PC-9 (cell line): ENCODE measurements at regions of chrX and their contacts with region 1.

Region 1: DNA sequence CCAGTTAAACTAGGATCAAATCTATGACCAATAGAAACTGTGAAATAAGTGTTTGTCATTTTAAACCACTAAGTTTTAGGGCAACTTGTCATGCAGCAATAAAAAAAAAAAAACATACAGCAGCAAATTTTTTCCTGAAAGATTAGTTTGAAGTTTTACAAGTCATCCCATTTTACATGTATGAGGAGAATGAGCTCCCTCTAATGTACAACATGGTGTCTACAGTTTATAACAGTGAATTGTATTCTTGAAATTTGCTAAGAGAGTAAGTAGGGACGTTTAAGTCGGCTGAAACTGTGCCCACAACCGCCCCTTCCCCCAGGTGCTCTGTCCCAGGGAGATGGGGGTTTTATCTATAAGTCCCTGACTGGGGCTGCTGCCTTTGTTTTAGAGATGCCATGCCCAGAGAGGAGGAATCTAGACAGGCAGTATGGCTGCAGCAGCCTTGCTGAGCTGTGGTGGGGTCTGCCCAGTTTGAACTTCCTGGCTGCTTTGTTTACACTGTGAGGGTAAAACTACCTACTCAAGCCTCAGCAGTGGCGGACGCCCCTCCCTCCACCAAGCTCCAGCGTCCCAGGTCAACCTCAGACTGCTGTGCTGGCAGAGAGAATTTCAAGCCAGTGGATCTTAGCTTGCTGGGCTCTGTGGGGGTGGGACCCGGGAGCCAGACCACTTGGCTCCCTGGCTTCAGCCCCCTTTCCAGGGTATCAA is 499.3 kb upstream of the CT83 start:
- DNase-seq: no peak
- H3K4me3 ChIP-seq: no peak overlapping the region
- H3K27ac ChIP-seq: no peak overlapping the region
- H3K4me1 ChIP-seq: no peaks in the 10 kb centered on the region; the same call in 1 of the 2 replicates
- H3K27me3 ChIP-seq: no peaks in the 10 kb centered on the region
- CTCF ChIP-seq: peak; percentile 60

Region 2: DNA sequence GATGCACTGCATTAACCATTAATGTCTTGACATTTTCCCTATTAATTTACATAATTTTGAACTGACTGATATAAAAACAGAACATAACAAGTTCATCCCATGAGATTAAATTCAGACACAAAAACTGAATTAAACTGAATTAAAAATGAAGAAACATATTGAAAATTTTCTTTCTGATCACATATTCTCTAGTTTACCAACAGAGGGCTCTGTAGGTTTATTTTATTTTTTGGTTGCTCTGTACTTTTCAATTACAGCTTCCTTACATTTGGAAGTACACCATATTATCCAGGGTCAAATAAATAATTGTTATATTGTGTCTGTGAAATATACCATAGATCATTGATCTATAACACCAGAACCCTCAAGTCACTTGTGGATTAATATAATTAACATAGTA is 471.9 kb before region 1 on chrX:
- CTCF ChIA-PET with region 1: interaction called, 5 read pairs
- POLR2A ChIA-PET with region 1: no interaction called
- intact Hi-C with region 1: loop called (anchors 10 kb)
- DNase-seq: no peak
- H3K4me3 ChIP-seq: no peak overlapping the region
- H3K27ac ChIP-seq: no peak overlapping the region
- H3K4me1 ChIP-seq: no peaks in the 10 kb centered on the region
- H3K27me3 ChIP-seq: no peaks in the 10 kb centered on the region
- CTCF ChIP-seq: peak; percentile 69

Region 3: DNA sequence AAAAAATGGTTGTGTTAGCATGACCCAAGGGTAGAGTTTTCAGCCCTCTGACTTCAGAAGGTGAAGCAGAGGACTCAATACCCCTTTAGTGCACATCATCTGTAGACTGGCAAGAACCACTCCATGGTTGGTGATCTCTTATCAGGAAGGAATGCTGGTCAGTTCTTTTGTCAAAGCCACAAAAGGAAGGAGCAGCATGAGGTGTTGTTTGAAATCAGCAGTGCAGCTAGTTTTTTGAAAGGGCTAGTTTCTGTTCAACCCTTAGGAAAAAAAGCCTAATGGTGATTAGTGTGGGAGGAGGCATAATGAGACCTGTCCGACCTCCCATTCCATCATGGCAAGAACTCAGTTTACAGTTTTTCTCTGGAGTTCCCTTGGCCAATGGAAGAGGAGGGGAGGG is 137.2 kb before region 1 on chrX:
- CTCF ChIA-PET with region 1: no interaction called
- POLR2A ChIA-PET with region 1: no interaction called
- intact Hi-C with region 1: no loop called
- DNase-seq: no peak
- H3K4me3 ChIP-seq: no peak overlapping the region
- H3K27ac ChIP-seq: no peak overlapping the region
- H3K4me1 ChIP-seq: no peaks in the 10 kb centered on the region
- H3K27me3 ChIP-seq: no peaks in the 10 kb centered on the region
- CTCF ChIP-seq: no peak

Region 4: GRCh38 chrX:116873671-116874070 is 88.4 kb before region 1 on chrX:
- CTCF ChIA-PET with region 1: no interaction called
- POLR2A ChIA-PET with region 1: no interaction called
- intact Hi-C with region 1: no loop called
- DNase-seq: peak; percentile 37 to 88
- H3K4me3 ChIP-seq: no peak overlapping the region
- H3K27ac ChIP-seq: peak overlapping the region; percentile 75
- H3K4me1 ChIP-seq: peaks cover 21% of the 10 kb centered on the region
- H3K27me3 ChIP-seq: no peaks in the 10 kb centered on the region
- CTCF ChIP-seq: no peak